ENCODE measurements at regions of chr11 and their contacts with region 1.

Region 1: GRCh38 chr11:43987384-43988039 is 45.1 kb downstream of the C11orf96 start:
- DNase-seq: peak; percentile 91 to 97 (median 94)
- ATAC-seq: peak; percentile 86 to 91 (median 90)
- H3K4me3 ChIP-seq: peak overlapping the region in 2 of 12 donors; percentile 2 to 16
- H3K27ac ChIP-seq: peak overlapping the region; percentile 46 to 91 (median 80)
- H3K4me1 ChIP-seq: peaks cover 15 to 72% (median 56%) of the 10 kb centered on the region in 12 donors
- H3K27me3 ChIP-seq: no peaks in the 10 kb centered on the region
- CTCF ChIP-seq: no peak
- POLR2A ChIP-seq: no peak

Region 2: DNA sequence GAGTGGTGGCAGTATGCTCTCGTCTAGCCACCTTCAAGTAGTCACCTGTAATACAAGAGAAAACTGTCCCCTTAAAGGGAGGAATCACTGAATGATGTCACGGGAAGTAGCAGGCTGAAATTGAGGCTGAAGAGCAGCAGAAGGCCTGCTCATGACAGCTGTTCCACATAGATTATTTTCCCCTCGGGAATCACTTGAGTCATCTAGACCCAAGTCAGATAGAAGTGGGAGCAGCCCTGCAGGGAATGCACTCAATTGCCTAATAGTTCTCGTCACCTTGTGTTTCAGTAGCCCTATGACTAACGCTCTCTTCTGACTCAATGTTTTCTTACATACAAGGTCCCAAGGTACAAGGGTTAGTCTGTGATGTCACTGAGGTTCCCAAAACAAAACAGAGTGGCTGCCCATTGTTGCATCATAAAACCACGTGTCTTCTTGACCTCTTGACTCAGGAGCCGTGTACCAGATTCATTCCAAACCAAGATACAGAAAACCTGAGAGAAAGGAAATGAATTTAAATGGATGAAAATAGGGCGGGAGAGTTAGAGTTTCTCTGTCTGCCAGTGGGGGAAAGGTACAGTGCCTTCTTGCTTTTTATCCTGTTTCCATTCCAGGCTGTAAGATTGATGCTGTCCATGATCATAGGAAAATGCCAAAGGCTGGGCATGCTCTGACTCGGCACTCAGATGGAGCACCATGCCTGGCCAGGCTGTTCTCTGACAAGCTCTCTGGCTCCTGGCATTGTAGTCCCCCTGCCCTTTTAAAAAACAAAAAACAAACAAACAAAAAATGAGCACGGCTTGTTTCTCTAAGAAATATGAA is 66.7 kb before region 1 on chr11:
- intact Hi-C with region 1: loop called in 1 of 10 experiments (anchors 2 kb)
- DNase-seq: peak in 4 of 5 donors; percentile 45 to 76 (median 64)
- ATAC-seq: peak; percentile 79 to 91 (median 82)
- H3K4me3 ChIP-seq: no peak overlapping the region
- H3K27ac ChIP-seq: peak overlapping the region; percentile 19 to 88 (median 74)
- H3K4me1 ChIP-seq: peaks cover 3 to 77% (median 32%) of the 10 kb centered on the region in 12 donors
- H3K27me3 ChIP-seq: no peaks in the 10 kb centered on the region
- CTCF ChIP-seq: no peak
- POLR2A ChIP-seq: no peak

Region 3: GRCh38 chr11:44029977-44030911 is 42.7 kb after region 1 on chr11:
- intact Hi-C with region 1: loop called in 6 of 10 experiments (anchors 1 to 5 kb)
- DNase-seq: peak; percentile 63 to 74 (median 68)
- ATAC-seq: peak; percentile 72 to 88 (median 82)
- H3K4me3 ChIP-seq: no peak overlapping the region
- H3K27ac ChIP-seq: peak overlapping the region in 11 of 12 donors; percentile 66 to 92 (median 80)
- H3K4me1 ChIP-seq: peaks cover 2 to 46% (median 30%) of the 10 kb centered on the region in 12 donors
- H3K27me3 ChIP-seq: no peaks in the 10 kb centered on the region
- CTCF ChIP-seq: no peak
- POLR2A ChIP-seq: no peak

Region 4: GRCh38 chr11:44036811-44037657 is 49.5 kb after region 1 on chr11:
- intact Hi-C with region 1: loop called in 5 of 10 experiments (anchors 1 to 5 kb)
- DNase-seq: peak; percentile 81 to 90 (median 88)
- ATAC-seq: peak; percentile 85 to 94 (median 92)
- H3K4me3 ChIP-seq: no peak overlapping the region
- H3K27ac ChIP-seq: peak overlapping the region in 2 of 12 donors; percentile 33 to 52
- H3K4me1 ChIP-seq: peaks cover 0 to 26% (median 16%) of the 10 kb centered on the region in 12 donors
- H3K27me3 ChIP-seq: no peaks in the 10 kb centered on the region
- CTCF ChIP-seq: peak; percentile 63 to 95 (median 88)
- POLR2A ChIP-seq: no peak